Endothelial cell of umbilical vein (primary cell): ENCODE measurements at regions of chr1 and their contacts with region 1.

Region 1: GRCh38 chr1:206106328-206107167 is 10.6 kb downstream of the AVPR1B start:
- DNase-seq: peak; percentile 85
- H3K4me3 ChIP-seq: no peak overlapping the region
- H3K27ac ChIP-seq: no peak overlapping the region
- H3K4me1 ChIP-seq: peaks cover 5% of the 10 kb centered on the region
- H3K27me3 ChIP-seq: no peaks in the 10 kb centered on the region
- CTCF ChIP-seq: peak; percentile 87 to 88
- POLR2A ChIP-seq: no peak

Region 2: GRCh38 chr1:205919026-205919746 is 187.4 kb before region 1 on chr1:
- CTCF ChIA-PET with region 1: interaction called, 47 read pairs
- POLR2A ChIA-PET with region 1: no interaction called
- dilution Hi-C with region 1: no loop called
- intact Hi-C with region 1: loop called (anchors 1 kb)
- DNase-seq: peak; percentile 85
- H3K4me3 ChIP-seq: no peak overlapping the region
- H3K27ac ChIP-seq: no peak overlapping the region
- H3K4me1 ChIP-seq: no peaks in the 10 kb centered on the region
- H3K27me3 ChIP-seq: no peaks in the 10 kb centered on the region
- CTCF ChIP-seq: peak; percentile 83 to 86
- POLR2A ChIP-seq: no peak

Region 3: DNA sequence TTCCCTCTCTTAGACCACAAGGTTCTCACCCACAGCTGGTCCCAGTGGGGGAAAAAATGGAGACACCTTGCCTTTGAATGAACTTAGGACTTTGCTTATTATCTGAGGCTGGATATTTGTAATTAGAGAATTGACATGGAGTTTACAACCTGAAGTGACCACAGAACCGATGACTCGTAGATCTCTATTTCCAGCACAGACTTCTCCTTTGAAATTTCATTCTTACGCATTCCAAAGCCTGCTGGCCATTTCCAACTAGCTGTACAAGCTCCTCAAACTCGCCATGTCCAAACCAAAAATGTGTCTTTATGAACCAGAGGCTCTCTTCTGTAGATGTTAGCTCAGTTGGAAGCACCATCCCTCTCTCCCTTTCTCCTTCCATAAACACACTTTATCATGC is 115.3 kb before region 1 on chr1:
- CTCF ChIA-PET with region 1: interaction called, 319 read pairs
- POLR2A ChIA-PET with region 1: no interaction called
- dilution Hi-C with region 1: loop called (anchors 25 kb)
- intact Hi-C with region 1: no loop called
- DNase-seq: no peak
- H3K4me3 ChIP-seq: no peak overlapping the region
- H3K27ac ChIP-seq: no peak overlapping the region
- H3K4me1 ChIP-seq: peaks cover 21% of the 10 kb centered on the region
- H3K27me3 ChIP-seq: no peaks in the 10 kb centered on the region
- CTCF ChIP-seq: no peak
- POLR2A ChIP-seq: no peak

Region 4: GRCh38 chr1:206094024-206094423 is 12.5 kb before region 1 on chr1:
- CTCF ChIA-PET with region 1: interaction called, 28 read pairs
- POLR2A ChIA-PET with region 1: no interaction called
- dilution Hi-C with region 1: no loop called
- intact Hi-C with region 1: no loop called
- DNase-seq: no peak
- H3K4me3 ChIP-seq: no peak overlapping the region
- H3K27ac ChIP-seq: no peak overlapping the region
- H3K4me1 ChIP-seq: no peaks in the 10 kb centered on the region
- H3K27me3 ChIP-seq: peaks cover 0 to 10% of the 10 kb centered on the region in 2 experiments
- CTCF ChIP-seq: no peak
- POLR2A ChIP-seq: no peak